B cell (primary cell): ENCODE measurements at regions of chr16 and their contacts with region 1.

Region 1: DNA sequence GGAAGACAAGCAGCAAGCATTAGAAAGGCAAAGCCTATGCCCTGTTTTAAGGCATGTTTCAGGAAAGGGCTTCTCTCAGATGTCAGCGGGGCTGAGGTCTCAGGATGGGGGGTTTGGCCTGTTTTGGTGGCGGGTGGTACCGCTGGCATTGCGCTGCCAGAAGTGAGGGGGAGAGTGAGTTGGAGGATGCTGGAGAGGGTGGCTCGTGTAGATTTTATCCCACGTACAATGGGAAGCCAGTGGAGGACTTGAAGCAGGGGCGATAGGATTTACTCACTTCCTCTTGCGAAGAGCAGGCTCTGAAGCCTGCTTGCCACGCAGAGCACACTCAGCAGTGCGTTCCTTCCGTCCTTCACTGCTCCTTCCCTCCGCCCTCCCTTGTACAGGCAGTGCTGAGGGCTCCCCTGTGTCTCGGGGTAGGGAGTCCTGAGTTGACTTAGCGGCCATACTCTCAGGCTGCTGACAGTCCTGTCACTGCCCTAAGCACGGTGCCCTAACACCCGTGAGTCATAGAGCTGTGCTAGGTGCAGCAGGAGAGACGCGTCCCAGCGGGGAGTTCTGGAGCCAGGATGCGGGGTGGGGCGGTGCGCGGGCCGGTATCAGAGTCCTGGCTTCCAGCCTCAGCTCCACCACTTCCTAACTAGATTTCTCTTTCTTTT is 113.1 kb downstream of the SNX29 start:
- DNase-seq: peak; percentile 80
- ATAC-seq: peak; percentile 92
- H3K4me3 ChIP-seq: peak overlapping the region in 4 of 5 experiments; percentile 7 to 34 (median 21)
- H3K4me3 Mint-ChIP-seq: peak overlapping the region; percentile 88
- H3K27ac ChIP-seq: peak overlapping the region; percentile 57 to 65
- H3K27ac Mint-ChIP-seq: peak overlapping the region; percentile 94
- H3K4me1 ChIP-seq: peaks cover 27 to 34% of the 10 kb centered on the region in 2 donors
- H3K4me1 Mint-ChIP-seq: peaks cover 32% of the 10 kb centered on the region
- H3K27me3 ChIP-seq: no peaks in the 10 kb centered on the region
- H3K27me3 Mint-ChIP-seq: no peaks in the 10 kb centered on the region
- CTCF ChIP-seq: no peak

Region 2: GRCh38 chr16:12079412-12079965 is 10.1 kb before region 1 on chr16:
- CTCF ChIA-PET with region 1: interaction called, 32 read pairs
- POLR2A ChIA-PET with region 1: interaction called, 3 read pairs
- intact Hi-C with region 1: loop called (anchors 1 kb)
- DNase-seq: no peak
- ATAC-seq: no peak
- H3K4me3 ChIP-seq: no peak overlapping the region
- H3K4me3 Mint-ChIP-seq: no peak overlapping the region
- H3K27ac ChIP-seq: peak overlapping the region; percentile 71 to 79
- H3K27ac Mint-ChIP-seq: peak overlapping the region; percentile 82
- H3K4me1 ChIP-seq: peaks cover 31 to 57% of the 10 kb centered on the region in 2 donors
- H3K4me1 Mint-ChIP-seq: peaks cover 45% of the 10 kb centered on the region
- H3K27me3 ChIP-seq: no peaks in the 10 kb centered on the region
- H3K27me3 Mint-ChIP-seq: no peaks in the 10 kb centered on the region
- CTCF ChIP-seq: no peak

Region 3: GRCh38 chr16:12133729-12134128 is 44.1 kb after region 1 on chr16:
- CTCF ChIA-PET with region 1: no interaction called
- POLR2A ChIA-PET with region 1: no interaction called
- intact Hi-C with region 1: no loop called
- DNase-seq: no peak
- ATAC-seq: no peak
- H3K4me3 ChIP-seq: no peak overlapping the region
- H3K4me3 Mint-ChIP-seq: no peak overlapping the region
- H3K27ac ChIP-seq: no peak overlapping the region
- H3K27ac Mint-ChIP-seq: no peak overlapping the region
- H3K4me1 ChIP-seq: no peaks in the 10 kb centered on the region
- H3K4me1 Mint-ChIP-seq: peaks cover 8% of the 10 kb centered on the region
- H3K27me3 ChIP-seq: no peaks in the 10 kb centered on the region
- H3K27me3 Mint-ChIP-seq: no peaks in the 10 kb centered on the region
- CTCF ChIP-seq: no peak